ENCODE measurements at regions of chr15 and their contacts with region 1.

Region 1: DNA sequence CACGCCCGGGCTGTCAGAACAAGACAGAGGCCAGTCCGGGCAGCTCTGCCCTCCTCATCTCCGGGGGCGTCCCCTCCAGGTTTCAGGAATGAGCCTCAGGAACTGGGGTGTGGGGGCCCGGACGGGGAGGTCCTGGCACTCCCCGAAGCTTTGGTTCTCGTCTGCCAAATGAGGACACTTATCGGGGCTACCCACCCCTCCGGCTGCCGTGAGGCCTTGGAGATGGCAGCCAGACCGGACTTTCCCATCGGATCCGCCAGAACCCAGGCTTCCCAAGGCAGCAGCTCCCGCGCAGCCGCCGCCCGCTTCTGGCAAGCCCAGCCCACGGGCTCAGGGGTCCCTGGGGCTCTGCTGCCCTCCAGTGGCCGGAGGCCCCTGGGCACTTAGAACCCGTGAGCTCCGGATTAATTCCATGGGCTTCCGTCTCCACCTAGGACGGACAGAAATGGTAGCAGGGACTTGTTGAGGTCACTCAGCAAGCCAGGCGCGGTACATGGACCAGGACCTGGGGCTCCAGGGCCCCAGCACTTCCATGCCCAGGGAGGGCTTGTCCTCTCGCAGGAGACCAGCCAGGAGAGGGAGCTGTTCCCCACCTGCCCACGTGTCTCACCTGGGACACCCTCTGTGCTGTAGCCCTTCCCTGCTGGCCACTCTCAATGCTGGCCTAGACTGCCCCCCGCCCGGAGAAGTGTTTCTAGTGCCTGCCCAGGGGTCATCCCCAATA is 89.4 kb downstream of the LINGO1 start:
- DNase-seq: peak; percentile 94
- H3K4me3 ChIP-seq: peak overlapping the region; percentile 38 to 53 (median 41)
- H3K27ac ChIP-seq: peak overlapping the region; percentile 11 to 51 (median 22)
- H3K4me1 ChIP-seq: peaks cover 18 to 36% (median 28%) of the 10 kb centered on the region in 4 donors
- H3K27me3 ChIP-seq: no peaks in the 10 kb centered on the region
- CTCF ChIP-seq: peak; percentile 95 to 99 (median 97)
- EP300 ChIP-seq: no peak
- POLR2A ChIP-seq: no peak

Region 2: DNA sequence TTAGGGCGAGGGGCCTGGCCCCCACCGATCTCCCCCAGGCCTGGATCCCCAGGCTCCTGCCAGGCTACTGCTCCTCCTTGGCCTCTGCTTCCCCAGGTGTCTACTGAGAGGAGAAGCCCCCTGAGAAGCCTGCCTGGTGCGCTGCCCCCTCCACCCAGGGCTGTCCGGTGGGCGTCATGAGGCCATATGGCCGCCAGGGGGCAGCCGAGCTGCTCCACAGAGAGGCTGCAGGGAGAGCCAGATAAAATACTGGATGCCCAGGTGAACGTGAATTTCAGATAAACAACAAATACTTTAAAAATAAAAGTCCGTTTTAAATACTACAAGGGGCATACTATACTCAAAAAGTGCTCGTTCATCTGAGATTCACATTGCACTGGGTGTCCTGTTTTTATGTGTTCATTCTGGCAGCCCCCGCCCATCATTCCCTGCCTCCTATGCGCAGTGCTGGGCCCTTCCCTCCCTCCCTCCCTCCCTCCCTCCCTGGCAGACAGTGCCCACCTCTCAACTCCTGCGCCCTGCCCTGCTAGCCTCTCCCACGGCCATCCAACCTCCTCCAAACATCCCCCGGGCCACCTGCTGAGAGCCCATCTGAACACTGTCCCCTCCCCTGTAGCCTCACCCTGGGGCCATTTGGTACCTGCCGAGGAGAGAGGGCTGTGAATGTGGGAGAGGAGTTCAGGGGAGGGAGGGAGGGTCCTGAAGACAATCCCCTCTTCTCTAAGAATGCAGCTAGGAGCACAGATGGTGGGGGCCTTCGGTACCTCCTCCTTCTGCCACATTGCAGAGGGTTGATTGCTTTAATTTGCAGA is 518.8 kb before region 1 on chr15:
- intact Hi-C with region 1: loop called (anchors 2 kb)
- DNase-seq: no peak
- H3K4me3 ChIP-seq: no peak overlapping the region
- H3K27ac ChIP-seq: no peak overlapping the region
- H3K4me1 ChIP-seq: peaks cover 0 to 22% (median 17%) of the 10 kb centered on the region in 4 donors
- H3K27me3 ChIP-seq: peaks cover 0 to 21% (median 0%) of the 10 kb centered on the region in 4 donors
- CTCF ChIP-seq: peak in 2 of 3 experiments; percentile 91 to 93
- EP300 ChIP-seq: no peak
- POLR2A ChIP-seq: no peak

Region 3: DNA sequence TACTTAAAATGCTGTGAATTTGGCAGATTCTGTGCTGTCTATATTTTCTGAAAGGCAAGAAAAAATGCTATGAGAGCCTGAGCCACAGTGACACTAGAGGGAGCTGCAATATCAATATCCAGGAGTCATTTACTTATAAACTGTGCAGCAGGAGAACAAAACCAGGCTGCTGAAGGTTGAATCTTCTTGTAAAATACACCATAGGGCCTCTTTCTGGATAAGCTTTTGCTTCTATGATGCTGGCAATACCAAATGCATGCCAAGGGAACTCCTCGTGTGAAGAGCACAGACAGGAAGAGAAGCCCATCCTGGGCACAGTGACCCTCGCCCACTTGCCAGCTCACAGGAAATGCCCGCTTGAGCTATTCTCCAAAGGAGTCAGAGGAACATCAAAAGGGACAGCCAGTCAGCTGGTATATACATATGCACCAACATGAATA is 424.4 kb before region 1 on chr15:
- intact Hi-C with region 1: loop called (anchors 5 kb)
- DNase-seq: peak; percentile 47
- H3K4me3 ChIP-seq: no peak overlapping the region
- H3K27ac ChIP-seq: no peak overlapping the region
- H3K4me1 ChIP-seq: peaks cover 0 to 8% (median 7%) of the 10 kb centered on the region in 4 donors
- H3K27me3 ChIP-seq: no peaks in the 10 kb centered on the region
- CTCF ChIP-seq: peak; percentile 59 to 72 (median 63)
- EP300 ChIP-seq: no peak
- POLR2A ChIP-seq: no peak

Region 4: DNA sequence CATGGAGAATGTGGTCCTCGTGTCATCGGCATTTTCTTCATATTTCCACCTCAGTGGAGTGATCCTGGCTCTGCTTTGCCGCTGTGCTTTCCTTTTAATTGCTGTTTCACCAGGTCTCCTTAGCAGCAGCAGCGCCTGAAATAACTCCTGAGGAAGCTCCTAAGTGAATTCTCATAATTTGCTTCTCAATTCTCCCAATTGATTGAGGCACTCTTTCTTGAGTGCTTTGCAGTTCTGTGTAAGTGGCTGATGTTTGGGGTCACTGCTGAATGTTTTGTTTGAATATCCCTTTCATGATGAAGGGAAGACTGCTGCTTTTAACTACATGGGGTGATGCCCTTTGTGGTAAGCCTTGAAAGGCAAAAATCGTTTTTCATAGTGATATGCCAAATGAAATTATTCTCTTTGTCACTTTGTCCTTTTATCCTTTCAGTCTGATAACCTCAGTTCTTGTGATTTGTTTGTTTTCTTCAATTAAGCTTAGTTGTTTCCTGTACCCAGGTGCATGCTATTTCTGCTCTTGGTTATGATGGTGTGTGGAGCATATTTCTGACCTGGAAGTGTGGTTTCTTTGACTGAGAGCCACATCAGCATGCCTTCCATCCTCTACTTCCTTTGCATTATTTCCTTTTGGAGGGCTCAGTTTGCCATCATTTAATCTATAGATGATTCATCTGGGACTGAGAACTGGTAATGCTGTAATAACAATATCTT is 86.0 kb before region 1 on chr15:
- intact Hi-C with region 1: no loop called
- DNase-seq: no peak
- H3K4me3 ChIP-seq: no peak overlapping the region
- H3K27ac ChIP-seq: peak overlapping the region in 1 of 4 donors; percentile 5
- H3K4me1 ChIP-seq: peaks cover 40 to 53% (median 43%) of the 10 kb centered on the region in 4 donors
- H3K27me3 ChIP-seq: no peaks in the 10 kb centered on the region
- CTCF ChIP-seq: no peak
- EP300 ChIP-seq: no peak
- POLR2A ChIP-seq: no peak

Region 5: DNA sequence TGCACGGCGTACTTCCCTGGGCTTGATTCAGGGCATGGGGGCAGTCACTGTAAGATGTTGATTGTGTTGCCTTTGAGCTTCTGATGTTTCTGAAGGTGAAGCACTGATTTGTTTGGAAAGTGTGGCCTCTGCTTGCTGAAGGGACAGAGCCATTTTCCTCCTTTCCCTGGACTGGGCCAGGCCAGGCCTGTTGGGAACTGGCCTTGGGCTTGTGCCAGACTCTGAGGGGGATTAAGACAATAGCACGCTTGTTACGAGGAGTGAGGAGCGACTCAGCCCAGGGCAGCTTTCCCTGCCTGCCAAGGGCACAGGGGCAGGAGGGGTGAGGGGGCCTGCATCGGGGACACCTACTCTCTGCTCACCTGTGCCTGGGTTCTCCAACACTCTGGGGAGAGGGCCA is 46.5 kb after region 1 on chr15:
- intact Hi-C with region 1: no loop called
- DNase-seq: no peak
- H3K4me3 ChIP-seq: no peak overlapping the region
- H3K27ac ChIP-seq: no peak overlapping the region
- H3K4me1 ChIP-seq: no peaks in the 10 kb centered on the region
- H3K27me3 ChIP-seq: no peaks in the 10 kb centered on the region
- CTCF ChIP-seq: no peak
- EP300 ChIP-seq: no peak
- POLR2A ChIP-seq: no peak